ENCODE measurements at regions of chr20 and their contacts with region 1.

Region 1: DNA sequence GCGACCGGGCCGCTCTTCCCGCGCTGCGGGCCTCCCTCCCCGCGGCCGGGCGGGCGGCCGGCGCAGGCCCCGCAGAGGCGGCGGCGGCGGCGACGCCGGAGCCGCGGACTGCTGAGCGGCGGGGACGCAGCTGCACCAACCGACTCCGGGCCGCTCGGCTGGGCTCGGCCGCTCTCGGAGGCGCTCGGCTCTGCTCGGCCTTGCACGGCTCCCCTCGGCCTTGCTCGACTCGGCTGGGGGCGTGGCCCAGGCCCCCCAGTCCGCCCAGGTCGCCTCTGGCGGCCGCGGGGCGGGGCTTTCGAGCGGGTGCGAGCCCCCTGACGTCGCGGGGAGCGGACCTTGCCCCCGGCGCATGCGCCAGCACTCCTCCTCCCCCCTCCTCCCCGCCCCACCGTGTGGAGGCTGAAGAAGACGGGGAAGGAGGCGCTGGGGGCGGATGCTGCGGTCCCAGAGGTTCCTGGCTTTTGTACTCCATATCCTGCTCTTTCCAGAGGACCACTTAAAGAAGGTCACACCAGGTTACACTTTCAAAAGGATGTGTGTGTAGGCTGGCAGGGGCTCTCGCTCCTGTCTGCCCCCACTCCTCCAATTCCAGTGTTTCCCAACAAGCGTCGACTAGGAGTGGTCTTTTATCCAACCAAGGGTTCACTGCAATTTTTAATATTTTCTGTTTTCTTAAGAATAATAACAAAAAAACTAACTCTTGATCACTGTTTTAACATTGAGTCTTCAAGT is at the start of gene ZHX3:
- DNase-seq: peak; percentile 98
- ATAC-seq: peak; percentile 95
- H3K4me3 ChIP-seq: peak within 1 kb of the TSS; percentile 83
- H3K27ac ChIP-seq: peak within 1 kb of the TSS; percentile 71
- H3K4me1 ChIP-seq: peaks cover 27% of the 10 kb centered on the region
- H3K27me3 ChIP-seq: no peaks in the 10 kb centered on the region
- CTCF ChIP-seq: no peak
- total RNA-seq, gene ZHX3: 14.0 and 16.2 TPM in 2 replicates

Region 2: GRCh38 chr20:40811660-40812414 is 505.9 kb before region 1 on chr20:
- CTCF ChIA-PET with region 1: no interaction called
- POLR2A ChIA-PET with region 1: no interaction called
- intact Hi-C with region 1: no loop called
- DNase-seq: no peak
- ATAC-seq: no peak
- H3K4me3 ChIP-seq: no peak overlapping the region
- H3K27ac ChIP-seq: no peak overlapping the region
- H3K4me1 ChIP-seq: no peaks in the 10 kb centered on the region
- H3K27me3 ChIP-seq: peaks cover 47% of the 10 kb centered on the region
- CTCF ChIP-seq: peak; percentile 16; the same call in 1 of the 2 replicates

Region 3: GRCh38 chr20:41232973-41233926 is 84.5 kb before region 1 on chr20:
- CTCF ChIA-PET with region 1: interaction called, 4 read pairs
- POLR2A ChIA-PET with region 1: interaction called, 3 read pairs
- intact Hi-C with region 1: loop called (anchors 5 kb)
- DNase-seq: peak; percentile 79
- ATAC-seq: peak; percentile 72
- H3K4me3 ChIP-seq: no peak overlapping the region; the same call in 1 of the 2 replicates
- H3K27ac ChIP-seq: peak overlapping the region; percentile 10; the same call in 1 of the 2 replicates
- H3K4me1 ChIP-seq: peaks cover 32% of the 10 kb centered on the region
- H3K27me3 ChIP-seq: no peaks in the 10 kb centered on the region
- CTCF ChIP-seq: no peak

Region 4: DNA sequence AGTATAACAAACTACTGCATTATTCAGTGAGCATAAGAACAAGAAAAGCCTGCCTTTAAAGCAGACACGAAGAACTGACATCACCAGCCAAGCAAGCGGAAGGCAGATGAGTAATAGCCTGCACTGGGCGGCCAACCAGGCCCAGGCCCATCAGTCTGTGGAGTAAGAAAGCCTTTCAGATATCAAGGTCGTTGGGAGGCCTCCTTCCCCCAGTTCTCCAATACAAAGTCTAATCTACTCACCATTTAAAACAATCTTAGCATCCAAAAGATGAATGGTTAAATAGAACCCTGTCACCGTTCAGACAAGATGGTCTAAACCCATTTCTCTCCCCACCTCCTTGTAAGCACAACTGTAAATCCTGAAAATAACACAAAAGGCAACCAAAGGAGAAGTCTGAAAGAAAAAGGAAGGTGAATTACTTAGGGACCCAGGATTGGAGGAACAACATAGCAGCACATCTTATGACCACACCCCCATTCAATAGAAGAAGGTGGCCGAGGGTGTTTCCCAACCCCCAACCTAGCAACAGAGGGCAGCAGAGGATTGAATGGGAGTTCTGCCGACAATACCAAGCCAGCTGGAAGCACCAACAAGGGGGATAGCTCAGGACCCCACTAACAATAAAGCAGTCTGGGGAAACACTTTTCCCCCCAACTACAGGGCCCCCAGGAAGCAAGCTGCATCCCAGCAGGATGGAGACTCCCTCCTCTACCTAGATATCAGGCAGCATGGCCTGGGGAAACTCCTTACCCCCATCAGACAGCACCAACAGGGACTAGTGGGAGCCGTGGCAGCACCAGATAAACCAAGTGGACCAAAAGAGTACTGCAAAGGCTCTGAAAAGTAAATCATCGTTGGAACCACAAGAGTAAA is 68.1 kb before region 1 on chr20:
- CTCF ChIA-PET with region 1: no interaction called
- POLR2A ChIA-PET with region 1: no interaction called
- intact Hi-C with region 1: loop called (anchors 2 kb)
- DNase-seq: peak; percentile 83
- ATAC-seq: peak; percentile 90
- H3K4me3 ChIP-seq: peak overlapping the region; percentile 26; the same call in 1 of the 2 replicates
- H3K27ac ChIP-seq: peak overlapping the region; percentile 81
- H3K4me1 ChIP-seq: peaks cover 23% of the 10 kb centered on the region
- H3K27me3 ChIP-seq: no peaks in the 10 kb centered on the region
- CTCF ChIP-seq: peak; percentile 64

Region 5: GRCh38 chr20:41275301-41275731 is 42.4 kb before region 1 on chr20:
- CTCF ChIA-PET with region 1: no interaction called
- POLR2A ChIA-PET with region 1: no interaction called
- intact Hi-C with region 1: loop called (anchors 2 kb)
- DNase-seq: peak; percentile 69
- ATAC-seq: peak; percentile 84
- H3K4me3 ChIP-seq: peak overlapping the region; percentile 36
- H3K27ac ChIP-seq: peak overlapping the region; percentile 57
- H3K4me1 ChIP-seq: peaks cover 21% of the 10 kb centered on the region
- H3K27me3 ChIP-seq: no peaks in the 10 kb centered on the region
- CTCF ChIP-seq: no peak

Region 6: DNA sequence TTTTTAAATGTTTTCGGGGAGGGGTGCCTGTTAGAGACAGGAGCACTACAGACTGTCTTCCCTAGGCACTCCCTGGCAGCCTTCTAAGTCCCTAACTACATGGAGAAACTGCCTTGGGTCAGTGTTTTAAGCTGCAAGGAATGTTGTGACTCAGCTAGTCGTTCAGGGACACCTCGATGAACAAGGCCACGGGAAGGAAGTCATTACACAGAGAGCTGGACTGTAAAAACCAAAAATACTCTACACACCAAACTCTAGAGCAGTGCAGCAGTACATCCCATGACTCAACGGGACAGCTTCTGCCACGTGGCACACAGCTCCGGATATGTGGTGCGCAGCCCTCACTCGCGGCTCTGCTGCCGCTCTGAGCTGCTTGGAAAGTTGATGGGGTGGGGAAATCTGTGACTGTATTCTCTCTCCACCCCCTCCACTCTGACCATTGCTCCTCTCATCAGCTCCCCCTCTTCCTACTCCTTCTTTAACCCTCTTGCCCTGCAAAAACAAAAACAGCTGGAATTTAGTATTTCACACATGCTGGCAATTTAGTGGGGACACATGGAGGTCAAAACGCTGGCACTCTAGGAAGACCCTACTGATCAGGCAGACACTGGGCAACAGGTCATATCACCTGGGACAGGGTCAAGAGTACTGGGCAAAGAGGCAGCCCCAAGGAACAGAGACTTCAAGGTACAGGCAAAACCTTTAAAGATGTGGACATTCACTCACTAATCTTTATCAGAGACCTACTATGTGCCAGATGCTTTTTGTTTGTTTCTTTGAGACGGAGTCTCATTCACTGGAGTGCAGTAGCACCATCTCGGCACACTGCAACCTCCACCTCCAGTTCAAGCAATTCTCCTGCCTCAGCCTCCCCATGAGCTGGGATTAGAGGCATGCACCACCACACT is 12.0 kb after region 1 on chr20:
- CTCF ChIA-PET with region 1: interaction called, 10 read pairs
- POLR2A ChIA-PET with region 1: interaction called, 8 read pairs
- intact Hi-C with region 1: no loop called
- DNase-seq: peak; percentile 96
- ATAC-seq: peak; percentile 99
- H3K4me3 ChIP-seq: peak overlapping the region; percentile 1; the same call in 1 of the 2 replicates
- H3K27ac ChIP-seq: peak overlapping the region; percentile 74
- H3K4me1 ChIP-seq: peaks cover 16% of the 10 kb centered on the region
- H3K27me3 ChIP-seq: no peaks in the 10 kb centered on the region
- CTCF ChIP-seq: no peak